GM12878 (cell line): ENCODE measurements at regions of chr2 and their contacts with region 1.

Region 1: GRCh38 chr2:62406573-62407043 is 99.4 kb downstream of the TMEM17 start:
- DNase-seq: peak; percentile 77
- ATAC-seq: peak; percentile 93
- H3K4me3 ChIP-seq: no peak overlapping the region
- H3K27ac ChIP-seq: peak overlapping the region; percentile 11
- H3K4me1 ChIP-seq: peaks cover 41% of the 10 kb centered on the region
- H3K27me3 ChIP-seq: no peaks in the 10 kb centered on the region
- CTCF ChIP-seq: no peak
- EP300 ChIP-seq: peak in 1 of 2 experiments; percentile 42; a peak in 1 of 4 replicates
- POLR2A ChIP-seq: no peak
- RAD21 ChIP-seq: no peak

Region 2: GRCh38 chr2:62313449-62314227 is 93.0 kb before region 1 on chr2:
- CTCF ChIA-PET with region 1: interaction called, 8 read pairs
- POLR2A ChIA-PET with region 1: interaction called, 7 read pairs
- RAD21 ChIA-PET with region 1: interaction called, 14 read pairs
- SMC1A ChIA-PET with region 1: interaction called, 28 read pairs
- in situ Hi-C with region 1: no loop called
- intact Hi-C with region 1: no loop called
- DNase-seq: peak; percentile 91
- ATAC-seq: peak; percentile 88
- H3K4me3 ChIP-seq: peak overlapping the region; percentile 27; the same call in 1 of the 2 replicates
- H3K27ac ChIP-seq: peak overlapping the region; percentile 92
- H3K4me1 ChIP-seq: peaks cover 54% of the 10 kb centered on the region
- H3K27me3 ChIP-seq: no peaks in the 10 kb centered on the region
- CTCF ChIP-seq: no peak
- EP300 ChIP-seq: no peak
- POLR2A ChIP-seq: no peak
- RAD21 ChIP-seq: peak; percentile 33; the same call in 1 of the 2 replicates

Region 3: DNA sequence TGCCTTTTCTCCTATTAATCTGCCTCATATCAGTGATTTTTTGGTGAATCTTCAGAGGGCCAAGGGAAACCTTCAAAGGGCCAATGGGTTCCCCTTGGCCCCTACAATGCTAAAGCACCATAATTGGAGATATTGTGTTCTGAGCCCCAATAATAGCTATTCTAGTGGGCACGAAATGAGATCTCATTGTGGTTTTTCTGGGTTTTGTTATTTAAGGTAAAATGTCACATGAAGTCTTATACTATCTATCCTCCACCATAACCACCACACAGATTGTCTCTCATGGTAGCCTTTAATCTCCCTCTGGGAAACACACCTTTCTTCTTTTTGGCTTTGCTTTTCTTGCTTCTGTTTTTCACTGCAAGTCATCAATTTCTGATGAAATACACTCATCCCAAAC is 57.9 kb before region 1 on chr2:
- CTCF ChIA-PET with region 1: interaction called, 4 read pairs
- POLR2A ChIA-PET with region 1: no interaction called
- RAD21 ChIA-PET with region 1: interaction called, 3 read pairs
- SMC1A ChIA-PET with region 1: interaction called, 6 read pairs
- in situ Hi-C with region 1: loop called (anchors 5 kb)
- intact Hi-C with region 1: loop called (anchors 1 kb)
- DNase-seq: peak; percentile 78
- ATAC-seq: peak; percentile 57
- H3K4me3 ChIP-seq: no peak overlapping the region
- H3K27ac ChIP-seq: peak overlapping the region; percentile 84
- H3K4me1 ChIP-seq: peaks cover 38% of the 10 kb centered on the region
- H3K27me3 ChIP-seq: no peaks in the 10 kb centered on the region
- CTCF ChIP-seq: no peak
- EP300 ChIP-seq: peak in 1 of 2 experiments; percentile 53; a peak in 1 of 4 replicates
- POLR2A ChIP-seq: no peak
- RAD21 ChIP-seq: no peak

Region 4: GRCh38 chr2:62426154-62426912 is 19.7 kb after region 1 on chr2:
- CTCF ChIA-PET with region 1: no interaction called
- POLR2A ChIA-PET with region 1: no interaction called
- RAD21 ChIA-PET with region 1: no interaction called
- SMC1A ChIA-PET with region 1: no interaction called
- in situ Hi-C with region 1: no loop called
- intact Hi-C with region 1: no loop called
- DNase-seq: no peak
- ATAC-seq: no peak
- H3K4me3 ChIP-seq: no peak overlapping the region
- H3K27ac ChIP-seq: no peak overlapping the region
- H3K4me1 ChIP-seq: no peaks in the 10 kb centered on the region
- H3K27me3 ChIP-seq: no peaks in the 10 kb centered on the region
- CTCF ChIP-seq: no peak
- EP300 ChIP-seq: no peak
- POLR2A ChIP-seq: no peak
- RAD21 ChIP-seq: no peak

Region 5: DNA sequence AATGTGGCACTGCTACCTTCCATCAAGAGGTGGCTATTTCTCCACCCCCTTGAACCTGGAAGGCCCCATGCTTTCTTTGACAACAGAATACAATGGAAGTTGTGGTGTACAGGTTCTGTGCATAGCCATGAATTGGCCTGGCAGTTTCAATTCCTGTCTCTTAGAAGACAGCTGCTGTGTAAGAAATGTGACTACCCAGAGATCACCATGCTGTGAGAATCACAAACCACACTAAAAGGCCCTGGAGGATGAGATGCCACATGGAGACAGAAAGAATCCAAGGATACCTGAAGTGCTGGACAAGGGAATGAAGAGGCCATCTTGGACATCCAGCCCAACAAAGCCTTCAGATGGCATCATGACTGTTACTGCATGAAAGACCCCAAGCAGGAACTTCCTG is 251.2 kb after region 1 on chr2:
- CTCF ChIA-PET with region 1: no interaction called
- POLR2A ChIA-PET with region 1: no interaction called
- RAD21 ChIA-PET with region 1: no interaction called
- SMC1A ChIA-PET with region 1: no interaction called
- in situ Hi-C with region 1: no loop called
- intact Hi-C with region 1: no loop called
- DNase-seq: peak; percentile 38
- ATAC-seq: peak; percentile 58
- H3K4me3 ChIP-seq: no peak overlapping the region
- H3K27ac ChIP-seq: no peak overlapping the region
- H3K4me1 ChIP-seq: peaks cover 34% of the 10 kb centered on the region
- H3K27me3 ChIP-seq: no peaks in the 10 kb centered on the region
- CTCF ChIP-seq: no peak
- EP300 ChIP-seq: no peak
- POLR2A ChIP-seq: no peak
- RAD21 ChIP-seq: no peak